GM12878 (cell line): ENCODE measurements at regions of chr7 and their contacts with region 1.

Region 1: DNA sequence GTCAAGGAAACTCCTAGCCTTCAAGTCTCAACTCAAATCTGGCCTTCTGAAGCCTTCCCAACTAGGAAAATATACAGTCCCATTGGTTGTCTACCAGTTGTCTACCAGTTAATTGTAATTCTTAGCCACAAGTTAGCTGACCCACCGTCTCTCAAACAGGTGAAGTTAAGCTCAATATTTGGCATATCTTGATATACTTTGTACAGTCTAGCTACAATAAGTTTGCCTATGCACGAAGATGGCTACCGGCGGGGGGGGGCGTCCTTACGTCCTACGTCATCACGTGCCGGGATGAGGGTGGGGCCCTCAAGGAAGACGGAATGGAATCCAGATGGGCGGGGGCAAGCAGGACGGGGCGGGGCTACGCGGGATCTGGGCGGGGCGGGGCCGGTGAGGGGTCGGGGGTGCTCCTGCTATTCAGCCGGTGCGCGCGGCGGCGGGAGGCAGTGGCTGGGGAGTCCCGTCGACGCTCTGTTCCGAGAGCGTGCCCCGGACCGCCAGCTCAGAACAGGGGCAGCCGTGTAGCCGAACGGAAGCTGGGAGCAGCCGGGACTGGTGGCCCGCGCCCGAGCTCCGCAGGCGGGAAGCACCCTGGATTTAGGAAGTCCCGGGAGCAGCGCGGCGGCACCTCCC is at the start of gene AHR:
- DNase-seq: peak; percentile 62
- ATAC-seq: peak; percentile 79
- H3K4me3 ChIP-seq: peak within 1 kb of the TSS; percentile 89
- H3K27ac ChIP-seq: peak within 1 kb of the TSS; percentile 61
- H3K4me1 ChIP-seq: peaks cover 6% of the 10 kb centered on the region; the same call in 1 of the 2 replicates
- H3K27me3 ChIP-seq: no peaks in the 10 kb centered on the region
- CTCF ChIP-seq: no peak
- EP300 ChIP-seq: no peak
- POLR2A ChIP-seq: peak; percentile 89
- RAD21 ChIP-seq: no peak
- polyA plus RNA-seq, gene AHR: 1.7 to 1.9 TPM

Region 2: GRCh38 chr7:16989811-16990413 is 308.4 kb before region 1 on chr7:
- CTCF ChIA-PET with region 1: interaction called, 92 read pairs
- POLR2A ChIA-PET with region 1: no interaction called
- RAD21 ChIA-PET with region 1: interaction called, 62 read pairs
- SMC1A ChIA-PET with region 1: interaction called, 34 read pairs
- in situ Hi-C with region 1: loop called (anchors 5 kb)
- intact Hi-C with region 1: no loop called
- DNase-seq: no peak
- ATAC-seq: no peak
- H3K4me3 ChIP-seq: no peak overlapping the region
- H3K27ac ChIP-seq: no peak overlapping the region
- H3K4me1 ChIP-seq: no peaks in the 10 kb centered on the region
- H3K27me3 ChIP-seq: no peaks in the 10 kb centered on the region
- CTCF ChIP-seq: no peak
- EP300 ChIP-seq: no peak
- POLR2A ChIP-seq: no peak
- RAD21 ChIP-seq: no peak

Region 3: DNA sequence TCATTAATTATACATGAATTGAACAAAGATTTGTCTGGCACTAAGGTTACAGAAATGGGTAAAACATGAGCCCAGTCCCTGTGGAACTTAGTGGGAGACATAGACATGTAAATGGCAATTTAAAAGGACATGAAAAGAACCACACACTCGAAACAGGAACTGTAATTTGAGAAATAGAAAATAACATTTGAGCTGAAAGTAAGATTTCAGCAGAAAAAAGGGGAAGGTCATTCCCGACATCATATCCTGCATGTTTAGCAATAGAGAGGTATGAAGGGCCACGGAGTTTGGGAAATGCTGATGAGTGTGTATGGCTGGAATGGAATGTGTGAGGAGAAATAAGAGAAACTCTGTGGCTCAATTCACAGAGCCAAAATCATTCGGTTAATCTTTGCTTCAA is 175.3 kb before region 1 on chr7:
- CTCF ChIA-PET with region 1: interaction called, 3 read pairs
- POLR2A ChIA-PET with region 1: no interaction called
- RAD21 ChIA-PET with region 1: interaction called, 11 read pairs
- SMC1A ChIA-PET with region 1: interaction called, 7 read pairs
- in situ Hi-C with region 1: no loop called
- intact Hi-C with region 1: no loop called
- DNase-seq: peak; percentile 34
- ATAC-seq: peak; percentile 65
- H3K4me3 ChIP-seq: no peak overlapping the region
- H3K27ac ChIP-seq: peak overlapping the region; percentile 51; the same call in 1 of the 2 replicates
- H3K4me1 ChIP-seq: peaks cover 28% of the 10 kb centered on the region
- H3K27me3 ChIP-seq: no peaks in the 10 kb centered on the region; a peak in 1 of 4 replicates
- CTCF ChIP-seq: no peak
- EP300 ChIP-seq: peak in 1 of 2 experiments; percentile 37; a peak in 1 of 4 replicates
- POLR2A ChIP-seq: no peak
- RAD21 ChIP-seq: no peak

Region 4: GRCh38 chr7:17234398-17235031 is 63.8 kb before region 1 on chr7:
- CTCF ChIA-PET with region 1: interaction called, 5 read pairs
- POLR2A ChIA-PET with region 1: interaction called, 4 read pairs
- RAD21 ChIA-PET with region 1: interaction called, 6 read pairs
- SMC1A ChIA-PET with region 1: interaction called, 5 read pairs
- in situ Hi-C with region 1: no loop called
- intact Hi-C with region 1: loop called (anchors 2 kb)
- DNase-seq: peak; percentile 74
- ATAC-seq: peak; percentile 96
- H3K4me3 ChIP-seq: peak overlapping the region; percentile 46; the same call in 1 of the 2 replicates
- H3K27ac ChIP-seq: peak overlapping the region; percentile 96
- H3K4me1 ChIP-seq: peaks cover 12% of the 10 kb centered on the region
- H3K27me3 ChIP-seq: no peaks in the 10 kb centered on the region
- CTCF ChIP-seq: peak in 1 of 3 experiments; percentile 28; a peak in 1 of 6 replicates
- EP300 ChIP-seq: peak; percentile 95 to 99
- POLR2A ChIP-seq: no peak
- RAD21 ChIP-seq: peak; percentile 39; the same call in 1 of the 2 replicates

Region 5: GRCh38 chr7:17523813-17524741 is 225.8 kb after region 1 on chr7:
- CTCF ChIA-PET with region 1: interaction called, 17 read pairs
- POLR2A ChIA-PET with region 1: interaction called, 3 read pairs
- RAD21 ChIA-PET with region 1: interaction called, 34 read pairs
- SMC1A ChIA-PET with region 1: interaction called, 24 read pairs
- in situ Hi-C with region 1: no loop called
- intact Hi-C with region 1: no loop called
- DNase-seq: no peak
- ATAC-seq: no peak
- H3K4me3 ChIP-seq: no peak overlapping the region
- H3K27ac ChIP-seq: no peak overlapping the region
- H3K4me1 ChIP-seq: no peaks in the 10 kb centered on the region
- H3K27me3 ChIP-seq: no peaks in the 10 kb centered on the region
- CTCF ChIP-seq: no peak
- EP300 ChIP-seq: no peak
- POLR2A ChIP-seq: no peak
- RAD21 ChIP-seq: no peak

Region 6: DNA sequence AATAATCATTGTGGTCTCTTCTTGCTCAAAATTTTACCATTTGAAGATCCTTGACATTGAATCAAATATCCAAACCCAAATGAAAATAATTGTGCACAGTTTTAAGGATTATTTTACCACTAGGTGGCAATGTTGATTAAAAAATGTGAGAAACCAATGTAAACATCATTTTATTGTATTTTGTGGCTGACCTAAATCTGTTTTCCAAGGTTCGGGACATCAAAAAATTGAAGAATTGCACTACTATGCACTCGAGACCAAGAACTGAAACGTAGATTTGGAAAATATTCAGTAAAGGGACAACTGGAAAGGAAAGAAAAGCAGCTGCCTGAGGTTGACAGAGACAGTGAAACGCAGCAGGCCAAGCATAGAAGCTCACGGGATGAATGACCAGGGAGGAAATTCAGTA is 382.6 kb after region 1 on chr7:
- CTCF ChIA-PET with region 1: interaction called, 12 read pairs
- POLR2A ChIA-PET with region 1: no interaction called
- RAD21 ChIA-PET with region 1: interaction called, 6 read pairs
- SMC1A ChIA-PET with region 1: interaction called, 6 read pairs
- in situ Hi-C with region 1: no loop called
- intact Hi-C with region 1: no loop called
- DNase-seq: no peak
- ATAC-seq: peak; percentile 64; the same call in 2 of the 3 replicates
- H3K4me3 ChIP-seq: no peak overlapping the region
- H3K27ac ChIP-seq: no peak overlapping the region
- H3K4me1 ChIP-seq: no peaks in the 10 kb centered on the region
- H3K27me3 ChIP-seq: 0 out of 4 replicates have a peak, but pooled peaks cover 0 to 4% of the 10 kb centered on the region in 2 experiments
- CTCF ChIP-seq: peak in 2 of 3 experiments; percentile 40 to 44; a peak in 4 of 6 replicates
- EP300 ChIP-seq: no peak
- POLR2A ChIP-seq: no peak
- RAD21 ChIP-seq: peak; percentile 45